ENCODE measurements at regions of chr11 and their contacts with region 1.

Region 1: GRCh38 chr11:36411202-36411640 is 98.9 kb downstream of the TRAF6 start:
- DNase-seq: peak; percentile 73 to 97 (median 96)
- H3K4me3 ChIP-seq: peak overlapping the region in 3 of 7 experiments; percentile 19 to 53 (median 43)
- H3K27ac ChIP-seq: peak overlapping the region; percentile 67 to 76
- H3K4me1 ChIP-seq: peaks cover 49 to 84% (median 74%) of the 10 kb centered on the region in 4 experiments
- H3K27me3 ChIP-seq: no peaks in the 10 kb centered on the region

Region 2: DNA sequence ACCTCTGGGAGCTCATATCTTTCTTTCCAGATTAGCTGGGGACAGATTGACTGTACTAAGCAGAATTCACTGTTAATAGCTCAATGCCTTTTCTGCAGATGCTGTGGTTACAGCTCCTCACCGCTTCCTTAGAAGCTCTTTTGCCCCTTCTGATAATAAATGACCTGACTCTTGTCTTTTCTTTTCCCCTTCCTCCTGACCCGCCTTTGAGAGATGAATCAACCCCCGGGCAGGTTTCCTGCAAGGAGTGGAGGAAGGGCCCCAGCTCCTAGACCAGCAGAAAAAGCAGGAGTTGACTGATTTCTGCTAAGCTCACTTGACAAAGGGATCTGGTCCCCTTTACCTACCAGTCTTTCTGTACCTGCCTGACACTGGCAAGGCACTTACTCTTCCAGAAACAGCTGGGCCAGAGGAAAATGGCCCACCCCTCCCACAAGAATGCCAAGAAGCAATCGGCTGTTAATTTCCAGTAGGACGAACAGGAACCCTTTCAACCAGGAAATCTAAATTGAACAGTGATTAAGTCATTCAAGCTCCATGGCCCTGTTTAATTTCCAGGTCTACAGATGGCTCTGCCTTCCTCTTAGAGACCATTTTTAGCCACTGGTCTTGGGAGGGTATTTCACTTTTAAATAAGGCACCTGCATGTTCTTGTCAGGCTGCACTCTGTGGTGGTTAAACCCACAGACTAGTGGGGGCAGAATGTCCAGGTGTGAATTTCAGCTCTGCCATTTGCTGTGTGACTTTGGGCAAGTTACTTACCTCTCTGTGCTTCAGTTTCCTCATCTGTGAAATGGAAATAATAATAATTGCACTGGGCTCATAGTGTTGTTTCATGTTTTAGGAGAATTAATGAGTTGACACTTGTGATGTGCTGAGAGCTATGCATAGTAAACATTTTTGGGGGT is 47.6 kb before region 1 on chr11:
- CTCF ChIA-PET with region 1: interaction called, 14 read pairs
- POLR2A ChIA-PET with region 1: interaction called, 3 read pairs
- DNase-seq: peak in 2 of 3 donors; percentile 77 to 87
- H3K4me3 ChIP-seq: no peak overlapping the region
- H3K27ac ChIP-seq: no peak overlapping the region
- H3K4me1 ChIP-seq: peaks cover 19 to 73% (median 57%) of the 10 kb centered on the region in 4 experiments
- H3K27me3 ChIP-seq: no peaks in the 10 kb centered on the region

Region 3: DNA sequence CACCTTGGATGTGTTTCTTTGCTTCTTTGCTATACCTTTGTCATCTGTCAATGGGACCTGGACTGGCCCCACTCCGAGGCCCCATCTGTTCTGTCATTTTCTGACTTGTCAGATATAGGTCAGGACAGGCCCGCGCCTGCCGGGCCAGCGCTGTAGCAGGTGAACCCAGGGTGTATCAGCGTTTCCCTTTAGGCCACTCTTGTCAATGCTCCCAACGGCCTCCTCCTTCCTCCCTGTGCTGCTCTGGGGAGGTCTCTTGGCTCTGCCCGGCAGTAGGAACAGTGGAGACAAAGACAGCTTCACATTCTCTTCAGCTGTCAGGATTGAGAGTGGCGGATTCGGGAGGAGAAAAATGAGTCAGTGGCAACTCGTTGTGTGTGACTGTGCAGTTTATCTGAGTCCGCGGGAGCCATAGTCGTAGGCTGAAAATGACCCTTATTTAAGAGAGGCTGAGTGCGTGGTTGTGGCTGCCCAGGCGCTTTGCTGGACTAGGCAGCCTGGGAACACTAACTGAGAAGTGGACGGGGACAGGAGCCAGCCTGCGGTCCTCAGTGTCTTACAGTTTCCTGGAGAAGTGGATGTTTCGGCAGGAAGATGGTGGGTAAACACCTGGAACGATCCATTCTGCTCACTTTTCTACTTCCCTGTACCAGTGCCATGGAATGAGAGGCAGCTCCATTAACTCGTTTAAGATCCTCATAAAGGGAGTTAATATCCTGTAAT is 12.8 kb before region 1 on chr11:
- CTCF ChIA-PET with region 1: interaction called, 46 read pairs
- POLR2A ChIA-PET with region 1: interaction called, 6 read pairs
- DNase-seq: no peak
- H3K4me3 ChIP-seq: no peak overlapping the region
- H3K27ac ChIP-seq: peak overlapping the region in 1 of 2 experiments; percentile 29
- H3K4me1 ChIP-seq: peaks cover 12 to 66% (median 59%) of the 10 kb centered on the region in 4 experiments
- H3K27me3 ChIP-seq: no peaks in the 10 kb centered on the region

Region 4: GRCh38 chr11:36425561-36426081 is 14.4 kb after region 1 on chr11:
- CTCF ChIA-PET with region 1: interaction called, 21 read pairs
- POLR2A ChIA-PET with region 1: interaction called, 13 read pairs
- DNase-seq: peak in 1 of 3 donors; percentile 20
- H3K4me3 ChIP-seq: no peak overlapping the region
- H3K27ac ChIP-seq: no peak overlapping the region
- H3K4me1 ChIP-seq: peaks cover 20 to 43% (median 31%) of the 10 kb centered on the region in 4 experiments
- H3K27me3 ChIP-seq: no peaks in the 10 kb centered on the region

Region 5: DNA sequence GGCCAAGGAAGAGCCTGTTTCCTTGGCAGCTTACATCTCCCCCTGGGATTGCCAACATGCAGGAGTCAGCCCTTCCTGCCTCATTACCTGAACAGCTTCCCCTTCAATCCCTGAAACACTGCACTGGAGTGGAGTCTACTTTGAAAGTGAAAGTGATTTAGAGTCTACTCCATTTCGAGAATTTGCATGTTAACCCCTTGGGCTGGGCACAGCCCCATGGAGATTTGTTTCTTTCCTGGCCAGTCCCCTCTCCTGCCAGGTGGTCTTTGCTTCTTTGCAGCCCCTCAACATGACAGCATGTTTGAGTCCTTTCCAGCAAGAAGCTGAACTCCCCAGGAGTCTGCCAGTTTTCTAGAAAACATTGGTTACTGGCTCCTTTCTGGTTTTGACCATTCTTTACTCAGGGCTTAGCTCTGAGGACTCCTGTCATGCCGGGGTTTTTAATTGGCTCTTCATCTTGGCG is 38.9 kb after region 1 on chr11:
- CTCF ChIA-PET with region 1: interaction called, 10 read pairs
- POLR2A ChIA-PET with region 1: interaction called, 3 read pairs
- DNase-seq: peak; percentile 21 to 57 (median 48)
- H3K4me3 ChIP-seq: peak overlapping the region in 6 of 7 experiments; percentile 12 to 74 (median 38)
- H3K27ac ChIP-seq: peak overlapping the region; percentile 0 to 27
- H3K4me1 ChIP-seq: peaks cover 28 to 64% (median 61%) of the 10 kb centered on the region in 4 experiments
- H3K27me3 ChIP-seq: no peaks in the 10 kb centered on the region